ENCODE measurements at regions of chr20 and their contacts with region 1.

Region 1: DNA sequence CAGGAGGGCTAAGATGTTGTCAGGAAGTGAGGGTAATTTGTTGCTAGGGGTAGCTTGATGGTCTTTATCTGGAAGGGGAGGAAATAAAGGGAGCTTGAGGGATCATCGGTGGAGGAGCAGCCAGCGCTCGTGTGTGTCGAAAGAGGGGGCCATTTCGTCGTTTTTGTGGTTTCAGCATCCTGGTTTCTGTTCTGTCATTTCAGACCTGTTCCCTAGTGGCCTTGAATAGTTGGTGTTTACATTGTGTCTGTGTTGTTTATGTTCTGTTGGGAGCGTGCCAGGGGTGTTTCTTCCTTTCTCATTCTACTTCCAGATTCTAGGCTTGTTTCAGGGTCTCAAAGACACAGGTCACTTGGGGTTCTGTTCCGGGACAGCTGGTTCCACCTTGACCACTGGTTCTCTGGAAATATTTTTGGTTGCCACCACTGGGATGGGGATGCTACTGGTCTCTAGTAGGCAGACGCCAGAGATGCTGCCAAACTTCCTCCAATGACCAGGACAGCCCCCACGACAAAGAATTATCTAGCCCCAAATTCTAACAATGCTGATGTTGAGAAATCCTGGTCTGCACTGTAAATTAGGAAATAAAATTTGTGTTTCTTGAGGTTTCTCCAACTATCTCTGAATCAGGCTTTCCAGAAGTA is 113.9 kb upstream of the NAA20 start:
- DNase-seq: peak in 24 of 42 donors; percentile 10 to 66 (median 36)

Region 2: GRCh38 chr20:19784511-19785172 is 118.6 kb before region 1 on chr20:
- intact Hi-C with region 1: loop called (anchors 10 kb)
- DNase-seq: peak in 41 of 42 donors; percentile 26 to 89 (median 65)

Measured in head of caudate nucleus (tissue), 42 donors.